ENCODE measurements at regions of chrX and their contacts with region 1.

Region 1: GRCh38 chrX:136259543-136259942 is 8.3 kb upstream of the MAP7D3 start:
- DNase-seq: no peak
- ATAC-seq: no peak
- H3K4me3 ChIP-seq: no peak overlapping the region
- H3K27ac ChIP-seq: peak overlapping the region; percentile 55
- H3K4me1 ChIP-seq: no peaks in the 10 kb centered on the region
- H3K27me3 ChIP-seq: no peaks in the 10 kb centered on the region
- CTCF ChIP-seq: no peak

Region 2: DNA sequence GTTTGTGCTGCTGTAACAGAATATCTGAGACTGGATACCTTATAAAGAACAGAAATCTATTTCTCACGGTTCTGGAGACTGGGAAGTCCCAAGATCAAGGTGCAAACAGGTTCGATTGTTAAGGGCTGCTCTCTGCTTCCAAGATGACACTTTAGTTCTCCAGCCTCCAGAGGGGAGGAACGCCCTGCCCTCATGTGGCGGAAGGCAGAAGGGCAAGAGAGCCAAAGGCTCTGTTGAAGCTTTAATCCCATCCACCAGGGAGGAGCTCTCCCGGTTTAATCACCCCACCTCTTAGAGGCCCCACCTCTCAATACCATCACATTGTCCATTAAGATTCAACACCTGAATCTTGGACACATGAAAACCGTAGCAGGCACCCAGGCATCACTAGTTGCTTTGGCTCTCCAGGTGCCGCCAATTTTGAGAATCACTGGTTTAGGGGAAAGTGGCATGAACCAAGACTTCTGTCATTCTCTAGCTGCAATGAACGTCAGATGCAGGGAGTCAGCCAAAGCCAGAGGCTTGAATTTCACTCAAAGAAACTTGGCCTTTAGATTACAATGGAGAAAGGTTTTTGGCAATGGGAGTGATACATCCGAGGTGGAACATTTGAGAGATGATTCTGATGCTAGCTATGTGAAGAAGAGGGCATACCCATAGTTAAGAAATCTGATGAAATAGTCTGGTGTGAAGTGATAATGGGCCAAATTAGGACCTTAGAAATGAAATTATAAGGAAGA is 96.5 kb before region 1 on chrX:
- intact Hi-C with region 1: loop called in 1 of 2 experiments (anchors 5 kb)
- DNase-seq: peak; percentile 55 to 78
- ATAC-seq: peak; percentile 74 to 85 (median 78)
- H3K4me3 ChIP-seq: no peak overlapping the region
- H3K27ac ChIP-seq: peak overlapping the region; percentile 32
- H3K4me1 ChIP-seq: peaks cover 12% of the 10 kb centered on the region
- H3K27me3 ChIP-seq: peaks cover 0 to 8% (median 0%) of the 10 kb centered on the region in 3 donors
- CTCF ChIP-seq: peak; percentile 80

Region 3: GRCh38 chrX:136209016-136209738 is 50.4 kb before region 1 on chrX:
- intact Hi-C with region 1: no loop called
- DNase-seq: peak; percentile 57 to 75
- ATAC-seq: peak in 2 of 4 donors; percentile 1 to 4
- H3K4me3 ChIP-seq: no peak overlapping the region
- H3K27ac ChIP-seq: peak overlapping the region; percentile 95
- H3K4me1 ChIP-seq: peaks cover 9% of the 10 kb centered on the region
- H3K27me3 ChIP-seq: no peaks in the 10 kb centered on the region
- CTCF ChIP-seq: peak; percentile 47

Region 4: GRCh38 chrX:136220535-136220934 is 39.0 kb before region 1 on chrX:
- intact Hi-C with region 1: no loop called
- DNase-seq: no peak
- ATAC-seq: no peak
- H3K4me3 ChIP-seq: no peak overlapping the region
- H3K27ac ChIP-seq: no peak overlapping the region
- H3K4me1 ChIP-seq: no peaks in the 10 kb centered on the region
- H3K27me3 ChIP-seq: no peaks in the 10 kb centered on the region
- CTCF ChIP-seq: no peak

Region 5: DNA sequence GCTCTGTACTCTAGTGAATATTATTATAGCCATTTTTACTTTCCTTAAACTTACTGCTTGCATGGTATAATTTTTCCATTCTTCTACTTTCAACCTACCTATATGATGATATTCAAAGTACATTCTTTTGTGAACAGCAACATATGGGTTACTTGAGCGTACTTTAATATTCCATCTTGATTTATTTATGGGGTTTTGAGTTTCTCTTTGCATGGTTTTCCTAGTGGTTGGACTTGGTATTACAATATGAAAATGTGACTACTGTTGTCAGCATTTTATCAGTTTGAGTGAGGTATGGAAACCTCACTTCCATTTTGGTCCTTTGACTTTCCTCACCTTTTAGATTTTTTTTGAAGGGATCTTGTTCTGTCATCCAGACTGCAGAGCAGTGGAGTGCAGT is 77.1 kb after region 1 on chrX:
- intact Hi-C with region 1: no loop called
- DNase-seq: no peak
- ATAC-seq: no peak
- H3K4me3 ChIP-seq: no peak overlapping the region
- H3K27ac ChIP-seq: no peak overlapping the region
- H3K4me1 ChIP-seq: no peaks in the 10 kb centered on the region
- H3K27me3 ChIP-seq: peaks cover 0 to 7% (median 0%) of the 10 kb centered on the region in 3 donors
- CTCF ChIP-seq: peak; percentile 35

Region 6: GRCh38 chrX:136417806-136418205 is 158.3 kb after region 1 on chrX:
- intact Hi-C with region 1: no loop called
- DNase-seq: no peak
- ATAC-seq: no peak
- H3K4me3 ChIP-seq: no peak overlapping the region
- H3K27ac ChIP-seq: no peak overlapping the region
- H3K4me1 ChIP-seq: no peaks in the 10 kb centered on the region
- H3K27me3 ChIP-seq: no peaks in the 10 kb centered on the region
- CTCF ChIP-seq: no peak